GM10248 (cell line): ENCODE measurements at regions of chr22 and their contacts with region 1.

Region 1: DNA sequence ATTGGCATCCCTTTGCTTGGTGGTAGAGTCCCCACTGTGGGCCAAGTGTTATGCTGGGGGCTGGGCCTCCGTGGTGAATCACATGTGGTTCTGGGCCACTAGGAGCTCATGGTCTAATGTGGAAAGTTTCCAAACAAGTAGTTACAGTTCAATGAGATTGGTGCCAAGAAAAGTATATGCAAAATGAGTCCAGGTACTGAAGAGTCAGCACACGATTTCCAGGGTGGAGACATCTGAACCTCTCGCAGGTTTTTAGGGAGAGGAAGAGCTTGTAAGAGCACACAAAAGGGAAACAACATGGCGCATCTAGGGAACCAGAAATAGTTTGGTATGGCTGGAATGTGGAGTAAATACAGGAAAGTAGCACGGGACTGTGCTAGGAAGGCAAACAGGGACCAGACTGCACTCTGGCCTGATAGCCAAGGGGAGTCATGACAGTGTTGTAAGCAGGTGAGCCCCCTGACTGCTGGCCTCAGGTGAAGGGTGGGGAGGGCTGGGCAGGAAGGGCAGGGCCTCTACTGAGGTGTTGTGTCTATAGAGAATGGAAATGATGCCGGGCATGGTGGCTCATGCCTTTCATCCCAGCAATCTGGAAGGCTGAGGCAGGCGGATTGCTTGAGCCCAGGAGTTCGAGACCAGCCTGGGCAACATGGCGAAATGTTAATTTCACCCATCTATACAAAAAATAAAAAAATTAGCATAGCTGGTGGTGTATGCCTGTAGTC is 12.6 kb downstream of the POLR2F start:
- DNase-seq: no peak
- CTCF ChIP-seq: no peak

Region 2: DNA sequence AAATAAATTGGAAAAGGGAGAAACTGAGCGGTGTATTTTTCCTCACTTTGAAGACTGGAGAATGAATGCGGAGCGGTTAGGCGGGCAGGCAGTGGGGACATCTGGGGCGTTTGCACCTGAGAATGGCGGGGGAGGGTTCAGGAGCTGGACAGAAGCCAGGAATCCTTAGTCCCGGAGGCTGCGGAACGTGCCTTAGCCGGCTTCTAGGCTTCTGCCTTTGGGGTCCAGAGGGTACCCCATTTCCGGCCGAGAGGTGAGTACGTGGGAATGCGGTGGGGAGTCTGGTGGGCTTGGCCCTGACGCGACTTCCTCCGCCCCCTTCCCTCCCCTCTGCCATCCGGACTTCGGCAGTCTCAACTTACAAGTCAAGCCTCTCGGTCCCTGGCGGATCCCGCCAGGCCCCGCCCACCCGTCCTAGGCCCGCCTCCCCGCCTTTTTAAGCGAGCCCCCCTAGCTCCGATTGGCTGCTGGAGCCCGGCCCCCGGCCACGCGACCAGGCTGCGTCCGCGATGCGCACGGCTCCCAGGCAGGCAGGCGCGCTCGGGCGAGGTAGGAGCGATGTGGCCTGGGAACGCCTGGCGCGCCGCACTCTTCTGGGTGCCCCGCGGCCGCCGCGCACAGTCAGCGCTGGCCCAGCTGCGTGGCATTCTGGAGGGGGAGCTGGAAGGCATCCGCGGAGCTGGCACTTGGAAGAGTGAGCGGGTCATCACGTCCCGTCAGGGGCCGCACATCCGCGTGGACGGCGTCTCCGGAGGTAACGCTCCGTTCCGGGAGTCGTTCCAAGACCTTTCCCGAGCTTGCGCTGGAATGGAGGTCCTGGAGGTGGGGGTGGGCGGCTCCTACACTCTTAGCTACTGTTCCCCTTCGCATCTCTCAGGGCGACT is 158.4 kb before region 1 on chr22 and contains the start of gene GCAT:
- CTCF ChIA-PET with region 1: interaction called, 11 read pairs
- POLR2A ChIA-PET with region 1: no interaction called
- DNase-seq: peak; percentile 99
- CTCF ChIP-seq: no peak

Region 3: GRCh38 chr22:37953437-37954179 is 12.5 kb before region 1 on chr22 and contains the starts of genes C22orf23 and POLR2F:
- CTCF ChIA-PET with region 1: interaction called, 36 read pairs
- POLR2A ChIA-PET with region 1: no interaction called
- DNase-seq: peak; percentile 100
- CTCF ChIP-seq: no peak

Region 4: GRCh38 chr22:37976547-37976946 is 10.4 kb after region 1 on chr22:
- CTCF ChIA-PET with region 1: interaction called, 18 read pairs
- POLR2A ChIA-PET with region 1: no interaction called
- DNase-seq: no peak
- CTCF ChIP-seq: no peak

Region 5: DNA sequence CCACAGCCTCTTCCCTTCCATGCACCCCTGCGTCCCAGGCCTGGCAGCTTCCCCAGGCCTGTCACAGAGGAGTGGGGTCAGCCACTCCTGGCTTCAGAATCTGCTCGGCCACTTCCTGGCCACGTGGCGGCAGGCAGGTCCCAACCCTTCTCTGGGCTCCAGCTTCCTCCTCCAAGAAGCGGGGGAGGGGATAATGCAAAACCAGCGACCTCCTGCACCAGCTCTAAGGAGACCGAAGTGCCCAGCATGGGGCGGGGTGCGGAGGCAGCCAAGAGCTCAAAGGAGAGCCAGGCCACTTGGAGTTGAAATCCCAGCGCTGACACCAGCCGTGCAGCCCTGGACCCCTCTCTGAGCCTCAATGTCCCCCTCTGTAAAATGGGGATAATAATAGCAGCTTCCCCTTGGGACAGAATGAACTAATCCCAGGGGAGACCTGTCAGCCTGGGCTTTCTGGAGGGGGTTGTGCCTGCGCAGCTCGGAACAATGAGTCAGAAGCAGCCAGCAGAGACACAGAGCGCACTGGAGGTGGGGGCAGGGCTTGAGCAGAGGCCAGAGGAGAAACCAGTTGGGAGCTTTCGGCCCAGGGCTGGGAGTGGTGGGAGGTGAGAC is 68.3 kb after region 1 on chr22:
- CTCF ChIA-PET with region 1: no interaction called
- POLR2A ChIA-PET with region 1: no interaction called
- DNase-seq: peak; percentile 61
- CTCF ChIP-seq: no peak

Region 6: GRCh38 chr22:38205261-38206128 is 239.4 kb after region 1 on chr22:
- CTCF ChIA-PET with region 1: no interaction called
- POLR2A ChIA-PET with region 1: no interaction called
- DNase-seq: no peak
- CTCF ChIP-seq: no peak